Psoas muscle (tissue), 8 donors: ENCODE measurements at regions of chr1 and their contacts with region 1.

Region 1: DNA sequence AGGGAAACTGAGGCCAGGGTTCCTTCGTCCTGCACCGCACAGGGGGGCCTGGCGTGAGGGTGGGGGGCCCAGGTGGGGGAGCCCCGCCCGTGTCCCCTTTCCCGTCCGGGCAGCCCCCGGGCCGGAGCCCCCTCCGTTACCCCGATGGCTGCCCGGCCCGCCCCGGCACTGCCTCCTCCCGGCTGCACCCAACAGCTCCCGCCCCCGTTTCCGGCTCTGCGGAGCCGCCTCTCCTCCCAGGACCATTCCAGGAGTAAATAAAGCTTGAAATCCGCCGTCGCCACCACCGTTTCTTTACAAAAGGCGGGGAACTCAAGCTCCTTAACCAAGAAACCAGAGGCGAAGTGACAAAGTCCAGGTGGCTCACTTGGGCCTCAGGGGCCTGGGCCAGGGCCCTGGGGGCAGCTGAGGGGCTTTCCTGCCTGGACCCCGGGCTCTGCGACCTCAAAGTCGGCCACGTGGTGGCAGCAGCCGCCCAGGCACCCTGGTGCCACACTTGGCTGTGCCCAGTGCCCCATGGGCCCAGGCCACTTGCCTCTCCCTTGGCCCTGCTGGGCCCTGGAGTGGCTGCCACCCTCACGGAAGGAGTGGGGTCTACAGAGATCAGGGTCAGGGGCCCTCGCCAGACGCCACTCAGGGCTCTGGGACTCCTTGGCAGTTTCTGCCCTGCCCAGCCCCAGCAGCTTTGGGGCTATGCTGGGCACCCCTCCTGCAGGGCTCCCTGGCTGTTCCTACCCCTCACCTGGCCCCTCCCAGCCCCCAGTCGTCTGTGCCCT is 514 bp upstream of the FAAP20 start:
- DNase-seq: peak; percentile 89 to 95
- ATAC-seq: peak; percentile 79 to 84 (median 82)
- H3K4me3 ChIP-seq: peak overlapping the region; percentile 84
- H3K27ac ChIP-seq: peak overlapping the region; percentile 93
- H3K4me1 ChIP-seq: peaks cover 53% of the 10 kb centered on the region
- H3K27me3 ChIP-seq: no peaks in the 10 kb centered on the region
- CTCF ChIP-seq: peak; percentile 92

Region 2: GRCh38 chr1:2180297-2181245 is 14.5 kb before region 1 on chr1:
- intact Hi-C with region 1: no loop called
- DNase-seq: no peak
- ATAC-seq: no peak
- H3K4me3 ChIP-seq: no peak overlapping the region
- H3K27ac ChIP-seq: no peak overlapping the region
- H3K4me1 ChIP-seq: no peaks in the 10 kb centered on the region
- H3K27me3 ChIP-seq: no peaks in the 10 kb centered on the region
- CTCF ChIP-seq: no peak

Region 3: GRCh38 chr1:2314803-2315673 is 120.0 kb after region 1 on chr1:
- intact Hi-C with region 1: loop called (anchors 2 to 5 kb)
- DNase-seq: peak; percentile 76 to 77
- ATAC-seq: peak in 3 of 4 donors; percentile 24 to 45 (median 41)
- H3K4me3 ChIP-seq: peak overlapping the region; percentile 69
- H3K27ac ChIP-seq: peak overlapping the region; percentile 74
- H3K4me1 ChIP-seq: peaks cover 16% of the 10 kb centered on the region
- H3K27me3 ChIP-seq: peaks cover 0 to 28% (median 3%) of the 10 kb centered on the region in 3 donors
- CTCF ChIP-seq: peak; percentile 94

Region 4: DNA sequence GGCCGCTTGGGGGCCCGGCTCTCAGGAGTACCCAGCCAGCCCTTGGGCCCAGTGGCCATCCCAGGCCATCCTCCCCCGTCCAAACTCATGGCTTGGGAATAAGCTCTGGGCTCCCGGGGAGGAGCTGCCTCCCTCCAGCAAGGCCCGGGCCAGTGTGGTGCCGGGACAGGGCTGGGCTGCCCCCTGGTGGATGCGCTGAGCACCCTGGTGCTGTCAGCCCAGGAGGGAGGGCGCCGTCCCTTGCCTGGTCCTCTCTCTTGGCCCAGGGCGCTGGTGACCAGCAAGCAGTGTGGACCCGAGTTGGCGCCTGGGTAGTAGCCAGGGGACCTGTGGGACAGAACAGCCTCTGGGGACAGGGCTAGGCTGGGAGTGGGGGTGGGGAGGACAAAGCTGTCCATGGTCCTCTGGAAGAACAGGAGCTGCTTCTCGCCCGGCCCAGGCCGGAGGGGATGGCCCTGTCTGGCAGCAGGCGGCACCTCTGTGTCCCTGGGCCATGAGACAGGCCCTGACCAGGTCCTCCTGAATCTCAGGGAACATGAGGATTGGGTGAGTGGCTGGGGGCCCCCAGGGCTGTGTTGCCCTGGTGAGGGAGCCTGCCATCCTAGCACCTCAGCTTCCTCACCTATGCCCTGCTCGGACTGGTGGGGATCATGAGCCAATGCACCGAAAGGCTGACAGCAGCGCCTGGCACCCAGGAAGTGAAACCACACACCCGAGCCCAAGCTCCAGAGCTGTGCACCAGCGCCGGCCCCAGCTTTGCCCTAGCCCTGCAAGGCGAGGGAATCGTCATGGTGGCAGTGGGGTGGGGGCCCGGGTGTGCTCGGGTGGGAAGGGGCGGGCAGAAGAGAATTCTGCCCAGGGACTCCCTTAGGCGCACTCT is 186.9 kb after region 1 on chr1:
- intact Hi-C with region 1: loop called (anchors 1 to 2 kb)
- DNase-seq: peak; percentile 82 to 92
- ATAC-seq: peak; percentile 91 to 98 (median 94)
- H3K4me3 ChIP-seq: no peak overlapping the region
- H3K27ac ChIP-seq: no peak overlapping the region
- H3K4me1 ChIP-seq: no peaks in the 10 kb centered on the region
- H3K27me3 ChIP-seq: no peaks in the 10 kb centered on the region
- CTCF ChIP-seq: peak; percentile 92

Region 5: DNA sequence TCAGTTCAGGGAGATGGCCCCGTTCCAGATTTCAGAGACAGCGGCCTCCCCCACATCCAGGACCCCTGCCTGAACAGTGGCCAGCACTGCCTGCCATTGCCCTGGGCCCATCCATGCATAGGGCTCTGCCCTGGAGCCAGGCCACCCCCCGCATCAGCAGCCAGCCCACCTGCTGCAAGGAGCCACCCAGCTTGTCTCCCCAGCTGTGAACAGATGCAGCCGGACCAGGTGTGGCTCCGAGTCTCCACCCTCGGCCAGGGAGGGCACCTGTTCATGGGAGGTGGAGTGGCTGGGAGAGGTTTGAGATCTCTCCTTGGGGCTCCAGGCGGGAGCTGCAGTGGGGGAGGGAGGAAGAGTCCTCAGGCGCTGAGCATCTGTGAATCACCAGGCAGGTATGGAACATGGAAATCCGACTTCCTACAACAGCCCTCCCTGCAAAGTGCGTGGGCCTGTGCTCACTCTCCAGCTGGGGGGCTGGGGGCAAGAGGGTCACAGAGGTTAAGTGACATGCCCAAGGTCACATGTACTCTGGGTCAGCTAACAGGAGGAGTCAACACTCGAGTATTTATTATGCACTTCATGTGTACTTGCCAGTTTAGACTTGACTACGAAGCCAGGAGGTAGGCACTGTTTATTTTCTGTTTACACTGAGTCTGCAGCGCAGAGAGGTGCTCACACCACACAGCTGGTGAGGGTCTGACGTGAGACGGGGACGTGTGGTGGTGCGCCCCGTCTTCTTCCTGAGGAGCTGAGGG is 339.8 kb after region 1 on chr1:
- intact Hi-C with region 1: loop called in 1 of 2 experiments (anchors 5 kb)
- DNase-seq: no peak
- ATAC-seq: no peak
- H3K4me3 ChIP-seq: no peak overlapping the region
- H3K27ac ChIP-seq: no peak overlapping the region
- H3K4me1 ChIP-seq: peaks cover 30% of the 10 kb centered on the region
- H3K27me3 ChIP-seq: peaks cover 0 to 16% (median 8%) of the 10 kb centered on the region in 3 donors
- CTCF ChIP-seq: no peak